MCF 10A (cell line): ENCODE measurements at regions of chr20 and their contacts with region 1.

Region 1: DNA sequence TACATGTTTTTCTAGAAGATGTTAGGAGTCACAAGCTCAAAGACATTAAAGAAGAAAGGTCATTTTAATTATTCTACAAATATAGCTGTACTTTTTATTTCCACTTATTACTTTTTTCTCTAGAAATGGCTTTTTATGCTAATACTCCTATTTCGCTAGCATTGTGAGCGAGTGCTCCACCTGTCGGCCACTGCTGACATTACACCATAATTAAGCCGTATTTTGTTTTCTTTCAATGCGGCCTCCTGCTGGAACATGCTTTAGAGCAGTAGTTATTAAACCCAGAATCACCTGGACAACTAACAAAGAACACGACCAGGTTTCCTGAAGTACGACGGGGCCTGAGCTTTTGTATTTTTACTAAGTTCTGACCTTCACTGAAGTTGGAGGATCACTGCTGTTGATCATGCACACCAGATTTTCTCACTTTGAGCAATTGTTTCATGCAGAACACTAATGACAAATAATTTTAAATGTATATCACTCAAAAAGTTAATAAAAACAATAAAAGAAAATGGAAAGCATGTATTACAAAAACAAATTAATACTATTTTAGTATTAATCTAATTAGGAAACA is 74.1 kb upstream of the PAK5 start:
- DNase-seq: peak; percentile 56
- H3K4me3 Mint-ChIP-seq: no peak overlapping the region
- H3K27ac Mint-ChIP-seq: no peak overlapping the region
- H3K4me1 Mint-ChIP-seq: no peaks in the 10 kb centered on the region
- H3K27me3 Mint-ChIP-seq: peaks cover 18% of the 10 kb centered on the region
- CTCF ChIP-seq: peak; percentile 64

Region 2: DNA sequence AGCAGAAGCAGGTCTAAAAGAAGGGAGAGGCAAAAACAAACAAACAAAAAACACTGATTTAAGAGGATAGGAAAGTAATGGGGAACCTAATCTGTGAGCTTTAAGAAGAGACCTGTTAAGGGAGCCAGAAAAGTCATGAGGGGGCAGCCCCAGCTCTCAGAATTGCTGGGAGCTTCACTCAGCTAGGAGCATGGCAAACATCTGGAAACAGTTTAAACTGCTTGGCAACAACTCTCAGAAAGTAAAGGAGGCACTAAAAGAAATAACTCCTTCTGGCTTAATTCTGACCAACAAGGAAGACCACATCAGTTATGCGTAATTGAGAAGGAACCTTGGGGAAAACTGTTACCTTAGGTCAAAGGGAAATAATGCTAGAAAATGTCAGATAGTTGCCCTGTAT is 277.2 kb before region 1 on chr20:
- CTCF ChIA-PET with region 1: interaction called, 11 read pairs
- POLR2A ChIA-PET with region 1: no interaction called
- intact Hi-C with region 1: no loop called
- DNase-seq: no peak
- H3K4me3 Mint-ChIP-seq: no peak overlapping the region
- H3K27ac Mint-ChIP-seq: no peak overlapping the region
- H3K4me1 Mint-ChIP-seq: no peaks in the 10 kb centered on the region
- H3K27me3 Mint-ChIP-seq: no peaks in the 10 kb centered on the region
- CTCF ChIP-seq: no peak

Region 3: DNA sequence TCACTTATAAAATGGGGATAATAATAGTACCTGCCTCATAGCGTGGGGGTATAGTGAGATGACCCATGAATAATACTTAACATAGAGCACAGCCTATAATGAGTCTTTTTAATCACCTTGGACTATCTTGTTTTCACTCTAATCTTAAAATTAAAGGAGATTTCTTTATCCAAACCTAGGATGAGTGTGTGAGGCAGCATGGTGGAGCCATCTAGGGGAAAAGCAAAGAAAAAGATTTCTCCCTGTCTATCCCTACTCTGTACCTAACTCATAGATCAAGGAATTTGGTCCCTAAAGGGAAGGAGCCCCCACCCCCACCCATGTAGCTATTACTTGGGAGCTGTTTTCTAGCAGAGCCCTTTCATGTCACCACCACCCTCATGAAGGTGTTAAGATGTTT is 28.9 kb before region 1 on chr20:
- CTCF ChIA-PET with region 1: interaction called, 16 read pairs
- POLR2A ChIA-PET with region 1: no interaction called
- intact Hi-C with region 1: no loop called
- DNase-seq: peak; percentile 13
- H3K4me3 Mint-ChIP-seq: no peak overlapping the region
- H3K27ac Mint-ChIP-seq: no peak overlapping the region
- H3K4me1 Mint-ChIP-seq: no peaks in the 10 kb centered on the region
- H3K27me3 Mint-ChIP-seq: peaks cover 22% of the 10 kb centered on the region
- CTCF ChIP-seq: no peak

Region 4: GRCh38 chr20:9889270-9889981 is 23.5 kb before region 1 on chr20:
- CTCF ChIA-PET with region 1: interaction called, 43 read pairs
- POLR2A ChIA-PET with region 1: no interaction called
- intact Hi-C with region 1: no loop called
- DNase-seq: peak; percentile 17
- H3K4me3 Mint-ChIP-seq: peak overlapping the region; percentile 35
- H3K27ac Mint-ChIP-seq: no peak overlapping the region
- H3K4me1 Mint-ChIP-seq: peaks cover 6% of the 10 kb centered on the region
- H3K27me3 Mint-ChIP-seq: no peaks in the 10 kb centered on the region
- CTCF ChIP-seq: no peak

Region 5: DNA sequence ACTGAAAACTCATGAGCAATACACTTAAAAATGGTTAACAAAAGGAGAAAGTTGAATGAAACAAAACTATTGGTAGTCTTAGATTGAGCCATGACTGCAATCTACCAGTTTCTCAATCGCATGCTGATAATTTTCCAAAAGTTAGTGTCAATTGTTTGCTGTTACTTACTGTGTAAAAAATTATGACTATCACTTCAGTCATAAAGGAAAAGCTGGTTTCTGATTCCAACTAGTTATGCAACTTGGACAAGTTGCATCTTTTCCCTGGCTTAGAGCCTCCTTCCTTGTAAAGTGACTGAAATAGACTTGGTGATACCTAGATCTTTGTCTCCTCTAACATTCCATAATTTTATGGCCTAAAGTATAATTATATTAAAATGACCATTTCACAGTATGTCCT is 14.3 kb after region 1 on chr20:
- CTCF ChIA-PET with region 1: interaction called, 69 read pairs
- POLR2A ChIA-PET with region 1: interaction called, 4 read pairs
- intact Hi-C with region 1: no loop called
- DNase-seq: peak; percentile 62
- H3K4me3 Mint-ChIP-seq: no peak overlapping the region
- H3K27ac Mint-ChIP-seq: no peak overlapping the region
- H3K4me1 Mint-ChIP-seq: no peaks in the 10 kb centered on the region
- H3K27me3 Mint-ChIP-seq: no peaks in the 10 kb centered on the region
- CTCF ChIP-seq: no peak

Region 6: GRCh38 chr20:9945408-9945807 is 32.5 kb after region 1 on chr20:
- CTCF ChIA-PET with region 1: interaction called, 14 read pairs
- POLR2A ChIA-PET with region 1: no interaction called
- intact Hi-C with region 1: no loop called
- DNase-seq: peak; percentile 43
- H3K4me3 Mint-ChIP-seq: no peak overlapping the region
- H3K27ac Mint-ChIP-seq: no peak overlapping the region
- H3K4me1 Mint-ChIP-seq: no peaks in the 10 kb centered on the region
- H3K27me3 Mint-ChIP-seq: no peaks in the 10 kb centered on the region
- CTCF ChIP-seq: no peak

Region 7: GRCh38 chr20:10096790-10097189 is 183.8 kb after region 1 on chr20:
- CTCF ChIA-PET with region 1: no interaction called
- POLR2A ChIA-PET with region 1: no interaction called
- intact Hi-C with region 1: no loop called
- DNase-seq: no peak
- H3K4me3 Mint-ChIP-seq: no peak overlapping the region
- H3K27ac Mint-ChIP-seq: no peak overlapping the region
- H3K4me1 Mint-ChIP-seq: peaks cover 11% of the 10 kb centered on the region
- H3K27me3 Mint-ChIP-seq: no peaks in the 10 kb centered on the region
- CTCF ChIP-seq: no peak

Region 8: GRCh38 chr20:10511509-10512251 is 598.7 kb after region 1 on chr20:
- CTCF ChIA-PET with region 1: no interaction called
- POLR2A ChIA-PET with region 1: no interaction called
- intact Hi-C with region 1: no loop called
- DNase-seq: peak; percentile 97
- H3K4me3 Mint-ChIP-seq: peak overlapping the region; percentile 56
- H3K27ac Mint-ChIP-seq: peak overlapping the region; percentile 89
- H3K4me1 Mint-ChIP-seq: peaks cover 45% of the 10 kb centered on the region
- H3K27me3 Mint-ChIP-seq: no peaks in the 10 kb centered on the region
- CTCF ChIP-seq: no peak